Activated naive CD4-positive, alpha-beta T cell treated with anti-CD3 and anti-CD28 coated beads for 36 hours (primary cell): ENCODE measurements at regions of chr2 and their contacts with region 1.

Region 1: GRCh38 chr2:46650556-46651001 is 171.2 kb downstream of the TMEM247 start:
- DNase-seq: peak; percentile 82
- H3K4me3 Mint-ChIP-seq: no peak overlapping the region
- H3K27ac Mint-ChIP-seq: no peak overlapping the region
- H3K4me1 Mint-ChIP-seq: no peaks in the 10 kb centered on the region
- H3K27me3 Mint-ChIP-seq: no peaks in the 10 kb centered on the region

Region 2: DNA sequence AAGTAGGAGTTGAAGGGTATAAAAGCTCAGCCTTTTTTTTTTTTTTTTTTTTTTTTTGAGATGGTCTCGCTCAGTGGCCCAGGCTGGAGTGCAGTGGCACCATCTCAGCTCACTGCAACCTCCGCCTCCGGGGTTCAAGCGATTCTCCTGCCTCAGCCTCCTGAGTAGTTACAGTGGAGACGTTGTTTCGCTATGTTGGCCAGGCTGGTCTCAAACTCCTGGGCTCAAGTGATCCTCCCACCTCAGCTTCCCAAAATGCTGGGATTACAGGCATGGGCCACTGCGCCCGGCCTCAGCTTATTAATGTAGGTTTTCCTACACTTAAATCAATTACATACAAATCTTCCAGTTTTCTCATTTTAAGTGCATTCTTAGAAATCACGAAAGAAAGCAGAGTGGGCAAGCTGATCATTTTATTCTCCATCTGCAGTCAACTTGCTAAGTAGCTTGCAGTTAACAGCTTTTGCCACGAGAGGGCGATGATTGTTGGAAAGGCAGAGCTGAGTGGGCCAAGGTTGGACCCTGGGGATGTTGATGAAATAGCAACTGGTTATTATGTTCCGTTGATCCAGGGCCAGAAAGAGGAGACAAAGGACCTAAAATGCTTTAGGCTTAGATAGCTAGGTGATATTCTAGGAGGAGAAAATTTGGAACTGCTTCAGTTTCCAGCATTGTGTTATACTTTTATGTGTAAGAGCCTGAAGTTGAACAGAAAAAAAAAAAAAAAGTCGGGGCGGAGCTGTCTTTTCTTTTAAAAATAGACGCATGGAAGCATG is 587.8 kb before region 1 on chr2:
- CTCF ChIA-PET with region 1: interaction called, 4 read pairs
- intact Hi-C with region 1: loop called (anchors 1 kb)
- DNase-seq: peak; percentile 86
- H3K4me3 Mint-ChIP-seq: no peak overlapping the region
- H3K27ac Mint-ChIP-seq: no peak overlapping the region
- H3K4me1 Mint-ChIP-seq: peaks cover 10% of the 10 kb centered on the region
- H3K27me3 Mint-ChIP-seq: no peaks in the 10 kb centered on the region

Region 3: DNA sequence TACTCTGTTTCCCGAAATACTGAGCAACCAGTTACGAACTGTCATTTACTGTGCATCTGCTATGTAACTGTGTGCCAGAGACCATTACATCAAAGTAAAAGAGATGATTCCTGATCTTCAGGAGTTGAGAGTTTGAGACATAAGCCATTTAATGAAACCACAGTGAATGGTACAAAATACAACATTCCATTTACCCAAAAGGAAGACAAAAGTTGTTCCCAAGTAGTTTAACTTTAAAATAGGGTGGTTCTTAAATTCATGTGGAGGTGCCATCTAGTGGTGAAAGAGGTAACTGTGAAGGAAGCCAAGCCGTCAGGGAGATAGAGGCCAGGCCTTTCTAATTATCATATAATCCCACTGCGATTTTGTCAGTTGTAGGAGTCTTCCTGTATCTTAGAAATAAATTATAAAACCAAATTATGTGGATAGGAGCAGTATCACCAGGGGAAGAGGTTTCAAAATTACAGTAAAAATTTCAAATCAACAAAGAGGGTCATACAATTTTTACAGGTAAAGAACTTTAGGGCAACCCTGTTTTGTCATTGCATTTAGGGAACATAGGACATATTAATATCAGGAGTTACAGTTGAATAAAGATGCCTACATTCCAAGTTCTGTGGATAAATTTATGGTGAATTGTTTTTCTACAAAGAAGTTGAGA is 285.7 kb before region 1 on chr2:
- CTCF ChIA-PET with region 1: no interaction called
- intact Hi-C with region 1: loop called (anchors 1 kb)
- DNase-seq: peak; percentile 57
- H3K4me3 Mint-ChIP-seq: no peak overlapping the region
- H3K27ac Mint-ChIP-seq: no peak overlapping the region
- H3K4me1 Mint-ChIP-seq: peaks cover 23% of the 10 kb centered on the region
- H3K27me3 Mint-ChIP-seq: no peaks in the 10 kb centered on the region

Region 4: GRCh38 chr2:46470114-46470628 is 180.4 kb before region 1 on chr2:
- CTCF ChIA-PET with region 1: interaction called, 13 read pairs
- intact Hi-C with region 1: no loop called
- DNase-seq: no peak
- H3K4me3 Mint-ChIP-seq: no peak overlapping the region
- H3K27ac Mint-ChIP-seq: no peak overlapping the region
- H3K4me1 Mint-ChIP-seq: peaks cover 2% of the 10 kb centered on the region
- H3K27me3 Mint-ChIP-seq: no peaks in the 10 kb centered on the region

Region 5: GRCh38 chr2:46887028-46887885 is 236.7 kb after region 1 on chr2:
- CTCF ChIA-PET with region 1: interaction called, 17 read pairs
- intact Hi-C with region 1: loop called (anchors 2 kb)
- DNase-seq: no peak
- H3K4me3 Mint-ChIP-seq: no peak overlapping the region
- H3K27ac Mint-ChIP-seq: peak overlapping the region; percentile 86
- H3K4me1 Mint-ChIP-seq: peaks cover 21% of the 10 kb centered on the region
- H3K27me3 Mint-ChIP-seq: no peaks in the 10 kb centered on the region

Region 6: DNA sequence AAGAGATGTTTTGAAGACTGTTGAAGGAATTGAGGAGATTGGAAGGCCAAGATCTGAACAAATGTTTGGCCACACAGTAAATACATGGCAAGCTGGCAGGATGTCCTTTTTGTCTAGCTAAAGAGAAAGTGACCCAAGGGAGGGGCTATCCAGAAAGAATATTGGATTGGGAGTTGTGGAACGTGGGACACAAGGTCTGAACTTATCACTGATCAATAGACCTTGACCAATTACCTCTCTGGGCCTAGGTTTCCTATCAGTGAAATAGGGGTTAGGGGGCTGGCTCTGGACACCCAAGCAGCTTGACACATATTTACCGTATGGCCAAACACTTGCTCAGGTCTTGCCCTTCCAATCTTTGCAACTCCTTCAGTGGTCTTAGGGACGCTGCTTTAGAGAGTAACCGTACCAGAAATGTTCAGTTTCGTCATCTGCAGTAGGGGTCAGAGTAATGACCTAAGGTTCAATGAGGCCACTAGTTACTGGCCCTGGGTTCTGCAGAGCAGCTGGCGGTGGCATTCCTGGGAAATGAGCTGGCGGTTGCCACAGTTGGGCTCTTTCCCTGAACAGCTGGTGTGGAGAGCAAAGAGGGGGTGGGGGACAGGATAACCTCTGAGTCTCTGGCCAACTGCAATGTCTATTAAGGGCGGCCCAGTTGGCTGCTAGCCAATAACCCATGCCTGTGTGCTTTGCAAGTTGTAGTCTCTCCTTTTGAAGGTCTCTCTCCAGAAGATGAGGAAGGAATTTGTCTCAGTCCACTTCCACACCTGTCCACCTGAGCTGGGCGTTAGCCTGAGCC is 574.7 kb after region 1 on chr2:
- CTCF ChIA-PET with region 1: no interaction called
- intact Hi-C with region 1: no loop called
- DNase-seq: no peak
- H3K4me3 Mint-ChIP-seq: no peak overlapping the region
- H3K27ac Mint-ChIP-seq: no peak overlapping the region
- H3K4me1 Mint-ChIP-seq: no peaks in the 10 kb centered on the region
- H3K27me3 Mint-ChIP-seq: no peaks in the 10 kb centered on the region